GM13977 (cell line): ENCODE measurements at regions of chr2 and their contacts with region 1.

Region 1: GRCh38 chr2:31333527-31334183 is 80.9 kb downstream of the XDH start:
- DNase-seq: peak; percentile 80
- CTCF ChIP-seq: peak; percentile 93

Region 2: GRCh38 chr2:30721668-30722647 is 611.7 kb before region 1 on chr2:
- in situ Hi-C with region 1: loop called (anchors 10 kb)
- DNase-seq: no peak
- CTCF ChIP-seq: no peak

Region 3: GRCh38 chr2:31170071-31170698 is 163.5 kb before region 1 on chr2:
- in situ Hi-C with region 1: loop called (anchors 10 kb)
- DNase-seq: peak; percentile 71
- CTCF ChIP-seq: peak; percentile 94